Astrocyte of the cerebellum (primary cell): ENCODE measurements at regions of chr3 and their contacts with region 1.

Region 1: GRCh38 chr3:58336135-58336882 is 3.6 kb downstream of the PXK start:
- DNase-seq: peak; percentile 42
- H3K4me3 ChIP-seq: no peak overlapping the region
- CTCF ChIP-seq: no peak

Region 2: DNA sequence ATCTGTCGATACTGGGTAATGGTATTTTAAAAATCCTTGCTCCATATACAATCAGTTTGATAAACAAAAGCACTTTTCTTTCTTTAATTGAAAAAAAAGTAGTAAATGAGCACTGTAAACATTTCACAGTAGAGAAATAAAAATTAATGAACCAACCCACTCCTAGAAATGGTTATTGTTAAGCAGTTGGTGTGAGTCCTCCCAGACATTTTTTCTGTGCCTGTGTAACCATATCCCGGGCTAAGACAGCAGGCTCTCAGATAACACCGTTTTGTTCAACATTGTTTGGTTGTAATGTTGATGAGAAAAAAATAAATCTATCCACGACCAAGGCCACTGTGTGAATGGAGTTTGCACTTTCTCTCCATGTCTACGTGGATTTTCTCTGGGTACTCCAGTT is 38.9 kb after region 1 on chr3:
- in situ Hi-C with region 1: loop called (anchors 5 kb)
- DNase-seq: no peak
- H3K4me3 ChIP-seq: no peak overlapping the region
- CTCF ChIP-seq: no peak

Region 3: GRCh38 chr3:58965865-58966264 is 629.6 kb after region 1 on chr3:
- in situ Hi-C with region 1: no loop called
- DNase-seq: no peak
- H3K4me3 ChIP-seq: no peak overlapping the region
- CTCF ChIP-seq: no peak